A673 (cell line): ENCODE measurements at regions of chr9 and their contacts with region 1.

Region 1: DNA sequence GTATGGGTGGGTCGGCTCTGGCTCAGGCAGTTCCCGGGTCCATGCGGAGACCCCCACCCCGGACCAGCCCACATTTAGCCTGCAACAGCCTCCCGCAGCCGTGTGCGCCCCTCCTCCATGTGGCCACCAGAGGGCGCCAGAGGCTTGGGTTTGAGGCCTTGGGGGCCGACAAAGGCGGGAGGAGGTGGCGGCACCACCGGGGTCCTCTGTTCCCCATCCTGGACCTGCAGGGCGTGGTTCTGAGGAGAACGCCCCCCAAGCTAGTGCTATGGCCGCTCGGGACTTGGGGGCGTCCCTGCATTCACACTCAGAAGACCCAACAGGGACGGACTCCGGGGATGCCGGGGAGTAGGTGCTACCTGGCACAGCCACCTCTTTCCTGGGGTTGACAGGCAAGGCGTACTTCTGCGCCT is 16.5 kb downstream of the ASS1 start:
- DNase-seq: peak; percentile 75
- H3K4me3 ChIP-seq: no peak overlapping the region
- H3K27ac ChIP-seq: no peak overlapping the region
- H3K4me1 ChIP-seq: no peaks in the 10 kb centered on the region
- H3K27me3 ChIP-seq: no peaks in the 10 kb centered on the region
- CTCF ChIP-seq: peak; percentile 86

Region 2: DNA sequence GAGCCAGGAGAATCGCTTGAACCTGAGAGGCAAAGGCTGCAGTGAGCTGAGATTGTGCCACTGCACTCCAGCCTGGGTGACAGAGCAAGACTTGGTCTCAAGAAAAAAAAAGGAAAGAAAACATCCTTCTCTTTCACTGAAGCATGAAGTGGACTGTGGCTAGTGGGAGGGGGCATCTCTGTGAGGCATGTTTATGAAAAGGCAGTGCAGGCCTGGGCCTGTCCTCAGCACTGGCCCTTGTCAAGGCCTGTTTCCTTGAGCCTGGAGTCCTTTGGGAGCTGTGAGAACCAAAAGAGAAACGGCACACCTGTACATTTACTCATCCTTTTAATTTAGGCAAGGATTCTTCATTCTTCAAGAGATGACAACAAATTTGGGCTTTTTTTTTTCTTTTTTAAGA is 99.8 kb after region 1 on chr9:
- CTCF ChIA-PET with region 1: no interaction called
- POLR2A ChIA-PET with region 1: no interaction called
- intact Hi-C with region 1: loop called (anchors 5 kb)
- DNase-seq: no peak
- H3K4me3 ChIP-seq: no peak overlapping the region
- H3K27ac ChIP-seq: no peak overlapping the region
- H3K4me1 ChIP-seq: no peaks in the 10 kb centered on the region
- H3K27me3 ChIP-seq: peaks cover 14% of the 10 kb centered on the region
- CTCF ChIP-seq: no peak

Region 3: GRCh38 chr9:130589754-130590153 is 128.5 kb after region 1 on chr9:
- CTCF ChIA-PET with region 1: no interaction called
- POLR2A ChIA-PET with region 1: interaction called, 32 read pairs
- intact Hi-C with region 1: no loop called
- DNase-seq: no peak
- H3K4me3 ChIP-seq: no peak overlapping the region
- H3K27ac ChIP-seq: no peak overlapping the region
- H3K4me1 ChIP-seq: no peaks in the 10 kb centered on the region
- H3K27me3 ChIP-seq: no peaks in the 10 kb centered on the region
- CTCF ChIP-seq: no peak

Region 4: DNA sequence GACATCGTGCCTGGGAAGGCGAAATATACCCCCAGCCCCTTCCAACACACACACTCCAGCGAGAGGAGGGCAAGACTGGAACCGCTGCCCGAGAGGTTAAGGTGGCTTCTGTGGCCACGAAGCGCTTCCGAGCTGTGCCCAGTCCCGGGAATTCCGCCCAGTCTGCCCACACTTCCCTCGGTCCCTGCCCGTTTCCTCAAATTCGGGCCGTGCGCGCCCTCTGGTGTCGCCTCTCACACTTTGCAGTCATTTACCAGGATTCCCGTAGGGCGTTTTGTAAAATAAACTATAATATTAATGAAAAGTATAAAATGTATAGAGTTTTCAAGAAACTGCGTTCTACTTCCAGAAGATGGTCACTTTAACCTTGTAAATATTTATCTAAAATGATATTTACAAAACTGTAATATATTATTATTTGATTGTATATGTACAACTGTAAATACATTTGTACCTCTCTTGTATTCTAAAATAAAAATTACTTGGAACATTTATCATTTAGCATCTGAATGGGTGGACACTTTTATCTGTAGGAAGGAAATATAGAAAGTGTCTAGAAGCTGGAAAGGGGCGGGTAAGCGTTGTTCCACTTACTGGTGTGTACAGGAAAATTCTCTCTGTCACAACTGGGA is 221.4 kb after region 1 on chr9:
- CTCF ChIA-PET with region 1: interaction called, 8 read pairs
- POLR2A ChIA-PET with region 1: no interaction called
- intact Hi-C with region 1: loop called (anchors 1 kb)
- DNase-seq: peak; percentile 83
- H3K4me3 ChIP-seq: peak overlapping the region; percentile 55
- H3K27ac ChIP-seq: no peak overlapping the region
- H3K4me1 ChIP-seq: peaks cover 13% of the 10 kb centered on the region
- H3K27me3 ChIP-seq: peaks cover 5% of the 10 kb centered on the region
- CTCF ChIP-seq: peak; percentile 91